Naive thymus-derived CD8-positive, alpha-beta T cell (primary cell): ENCODE measurements at regions of chr6 and their contacts with region 1.

Region 1: DNA sequence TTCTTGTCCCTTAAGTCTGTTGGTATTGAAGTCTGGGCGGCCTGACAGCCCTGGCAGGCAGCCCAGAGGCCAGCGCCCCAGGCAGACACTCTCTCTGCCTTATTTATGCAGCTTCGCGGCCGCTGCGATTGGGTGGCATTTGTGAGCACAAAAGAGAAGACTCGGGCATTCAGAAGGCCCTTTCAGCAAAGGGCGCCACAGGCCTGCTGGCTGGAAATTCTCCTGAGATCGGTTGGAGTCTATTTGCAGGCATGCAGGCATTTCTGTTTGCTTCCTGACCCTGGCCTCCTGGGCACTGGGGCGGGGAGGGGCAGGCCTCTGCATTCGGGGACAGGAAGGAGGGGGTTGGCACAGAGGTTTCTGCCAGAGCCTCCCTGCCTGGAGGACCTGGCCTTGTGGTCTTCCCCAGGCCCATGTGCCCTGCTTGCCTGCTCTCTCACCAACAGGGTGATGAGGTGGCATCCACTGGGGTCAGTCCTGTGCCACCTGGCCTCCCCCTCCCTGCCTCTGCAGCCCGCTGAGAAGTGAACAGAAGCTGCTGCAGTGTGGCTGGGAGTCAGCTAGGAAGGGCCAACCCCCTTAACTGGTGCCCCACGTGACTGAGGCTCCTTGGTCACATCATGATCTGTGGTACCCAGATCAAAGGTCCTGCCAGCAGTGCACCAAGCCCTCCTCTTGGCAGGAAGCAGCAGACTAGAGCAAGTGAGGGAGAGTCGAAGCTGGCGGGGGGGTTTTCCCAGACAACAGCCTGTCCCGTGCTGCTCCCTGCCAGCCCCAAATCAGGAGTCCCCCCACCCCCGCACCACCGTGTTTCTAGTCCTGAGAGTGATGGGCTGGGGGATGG is 16.6 kb upstream of the CCDC167 start:
- DNase-seq: peak; percentile 79 to 97 (median 93)
- ATAC-seq: peak; percentile 86 to 89
- H3K4me3 Mint-ChIP-seq: peak overlapping the region; percentile 80 to 97 (median 92)
- H3K27ac Mint-ChIP-seq: peak overlapping the region; percentile 97 to 100 (median 100)
- H3K4me1 Mint-ChIP-seq: peaks cover 53 to 93% (median 87%) of the 10 kb centered on the region in 4 donors
- H3K27me3 Mint-ChIP-seq: no peaks in the 10 kb centered on the region

Region 2: GRCh38 chr6:37432916-37433656 is 83.2 kb before region 1 on chr6 and contains the start of gene CMTR1:
- POLR2A ChIA-PET with region 1: interaction called, 13 read pairs
- DNase-seq: peak; percentile 94 to 97 (median 96)
- ATAC-seq: peak; percentile 87 to 93
- H3K4me3 Mint-ChIP-seq: peak within 1 kb of the TSS; percentile 66 to 96 (median 92)
- H3K27ac Mint-ChIP-seq: peak within 1 kb of the TSS; percentile 93 to 98 (median 97)
- H3K4me1 Mint-ChIP-seq: peaks cover 23 to 51% (median 39%) of the 10 kb centered on the region in 4 donors
- H3K27me3 Mint-ChIP-seq: peaks cover 0 to 13% (median 2%) of the 10 kb centered on the region in 5 donors
- polyA plus RNA-seq, gene CMTR1: 19.2 to 28.0 (median 24.0) TPM

Region 3: DNA sequence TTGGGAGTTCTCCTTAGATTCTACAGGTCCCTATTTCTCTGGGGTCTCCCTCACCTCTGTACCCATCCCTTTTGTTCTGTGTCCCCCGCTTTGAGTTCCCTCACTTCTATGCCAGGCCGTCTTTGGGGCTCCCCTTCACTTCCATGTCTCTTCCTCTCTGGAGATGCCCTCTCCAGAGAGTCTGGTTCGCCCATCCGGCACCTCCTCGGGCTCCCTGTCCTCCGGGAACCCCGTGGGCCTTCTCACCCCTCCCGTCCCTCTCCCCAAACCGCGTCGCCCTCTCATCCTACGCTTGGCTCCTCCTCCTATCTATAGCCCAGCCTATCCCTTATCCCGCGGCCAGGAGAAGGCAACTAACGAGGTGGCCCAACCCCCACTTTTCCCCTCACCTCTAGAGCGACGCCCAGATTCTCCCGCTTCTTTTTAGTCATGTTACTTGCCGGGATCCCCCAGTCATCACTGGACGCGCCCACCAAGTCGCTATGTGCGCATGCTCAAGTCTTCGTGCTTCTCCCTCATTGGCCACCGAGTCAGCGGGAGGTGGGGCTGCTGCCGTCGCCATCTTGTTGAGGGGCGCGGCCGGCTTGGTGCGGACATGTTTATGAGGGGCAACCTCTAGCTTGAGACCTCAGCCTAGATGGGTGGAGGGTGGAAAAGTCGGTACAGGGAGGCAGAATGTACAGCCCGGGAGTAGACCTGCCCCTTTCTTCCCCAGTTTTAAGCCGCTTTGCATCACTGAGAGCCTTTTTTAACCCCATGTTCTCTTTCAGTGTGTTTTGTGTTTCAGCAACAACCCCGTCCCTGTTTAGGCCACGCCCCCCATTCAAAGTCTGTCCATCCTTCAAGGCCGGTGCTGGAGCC is 16.6 kb before region 1 on chr6 and contains the start of gene CCDC167:
- POLR2A ChIA-PET with region 1: interaction called, 330 read pairs
- DNase-seq: peak; percentile 89 to 98 (median 94)
- ATAC-seq: peak; percentile 60 to 78
- H3K4me3 Mint-ChIP-seq: peak within 1 kb of the TSS; percentile 91 to 99 (median 97)
- H3K27ac Mint-ChIP-seq: peak within 1 kb of the TSS; percentile 95 to 100 (median 96)
- H3K4me1 Mint-ChIP-seq: peaks cover 37 to 83% (median 61%) of the 10 kb centered on the region in 4 donors
- H3K27me3 Mint-ChIP-seq: no peaks in the 10 kb centered on the region
- polyA plus RNA-seq, gene CCDC167: 64.3 to 74.7 (median 69.3) TPM

Region 4: DNA sequence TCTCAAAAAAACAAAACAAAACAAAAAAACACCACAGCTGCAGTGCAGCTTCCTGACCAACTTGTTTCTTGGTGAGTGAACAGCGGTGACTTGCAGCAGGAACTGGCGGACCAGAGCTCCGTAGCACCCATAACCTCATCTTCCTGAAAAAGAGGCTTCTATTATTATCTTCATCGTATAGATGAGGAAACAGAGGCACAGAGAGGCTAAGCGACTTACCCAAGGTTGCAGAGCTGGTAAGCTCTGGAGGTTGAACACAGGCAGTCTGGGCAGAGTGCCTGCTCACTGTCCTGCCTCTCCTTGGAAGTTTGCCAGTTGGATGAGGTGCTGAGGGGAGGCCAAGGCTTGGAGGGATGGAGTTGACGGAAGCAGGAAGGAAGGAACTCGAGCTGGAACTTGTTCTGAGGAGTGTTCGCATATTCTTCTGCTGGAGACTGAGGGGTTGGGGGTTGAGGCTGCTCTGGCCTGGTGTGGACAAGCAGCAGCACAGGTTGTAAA is 31.3 kb after region 1 on chr6:
- POLR2A ChIA-PET with region 1: interaction called, 10 read pairs
- DNase-seq: peak in 2 of 10 donors; percentile 25 to 32
- ATAC-seq: peak; percentile 42 to 62
- H3K4me3 Mint-ChIP-seq: peak overlapping the region in 8 of 10 donors; percentile 10 to 75 (median 38)
- H3K27ac Mint-ChIP-seq: peak overlapping the region; percentile 71 to 92 (median 84)
- H3K4me1 Mint-ChIP-seq: peaks cover 11 to 57% (median 36%) of the 10 kb centered on the region in 4 donors
- H3K27me3 Mint-ChIP-seq: no peaks in the 10 kb centered on the region

Region 5: GRCh38 chr6:37566111-37566949 is 50.0 kb after region 1 on chr6:
- POLR2A ChIA-PET with region 1: interaction called, 36 read pairs
- DNase-seq: peak; percentile 54 to 81 (median 72)
- ATAC-seq: peak; percentile 95 to 97
- H3K4me3 Mint-ChIP-seq: peak overlapping the region; percentile 28 to 81 (median 55)
- H3K27ac Mint-ChIP-seq: peak overlapping the region in 5 of 10 donors; percentile 7 to 85 (median 72)
- H3K4me1 Mint-ChIP-seq: peaks cover 6 to 39% (median 13%) of the 10 kb centered on the region in 4 donors
- H3K27me3 Mint-ChIP-seq: peaks cover 0 to 9% (median 5%) of the 10 kb centered on the region in 5 donors

Region 6: GRCh38 chr6:37607944-37608343 is 91.6 kb after region 1 on chr6:
- POLR2A ChIA-PET with region 1: no interaction called
- DNase-seq: no peak
- ATAC-seq: no peak
- H3K4me3 Mint-ChIP-seq: no peak overlapping the region
- H3K27ac Mint-ChIP-seq: no peak overlapping the region
- H3K4me1 Mint-ChIP-seq: peaks cover 0 to 1% (median 0%) of the 10 kb centered on the region in 4 donors
- H3K27me3 Mint-ChIP-seq: peaks cover 0 to 16% (median 8%) of the 10 kb centered on the region in 5 donors